ENCODE measurements at regions of chr17 and their contacts with region 1.

Region 1: DNA sequence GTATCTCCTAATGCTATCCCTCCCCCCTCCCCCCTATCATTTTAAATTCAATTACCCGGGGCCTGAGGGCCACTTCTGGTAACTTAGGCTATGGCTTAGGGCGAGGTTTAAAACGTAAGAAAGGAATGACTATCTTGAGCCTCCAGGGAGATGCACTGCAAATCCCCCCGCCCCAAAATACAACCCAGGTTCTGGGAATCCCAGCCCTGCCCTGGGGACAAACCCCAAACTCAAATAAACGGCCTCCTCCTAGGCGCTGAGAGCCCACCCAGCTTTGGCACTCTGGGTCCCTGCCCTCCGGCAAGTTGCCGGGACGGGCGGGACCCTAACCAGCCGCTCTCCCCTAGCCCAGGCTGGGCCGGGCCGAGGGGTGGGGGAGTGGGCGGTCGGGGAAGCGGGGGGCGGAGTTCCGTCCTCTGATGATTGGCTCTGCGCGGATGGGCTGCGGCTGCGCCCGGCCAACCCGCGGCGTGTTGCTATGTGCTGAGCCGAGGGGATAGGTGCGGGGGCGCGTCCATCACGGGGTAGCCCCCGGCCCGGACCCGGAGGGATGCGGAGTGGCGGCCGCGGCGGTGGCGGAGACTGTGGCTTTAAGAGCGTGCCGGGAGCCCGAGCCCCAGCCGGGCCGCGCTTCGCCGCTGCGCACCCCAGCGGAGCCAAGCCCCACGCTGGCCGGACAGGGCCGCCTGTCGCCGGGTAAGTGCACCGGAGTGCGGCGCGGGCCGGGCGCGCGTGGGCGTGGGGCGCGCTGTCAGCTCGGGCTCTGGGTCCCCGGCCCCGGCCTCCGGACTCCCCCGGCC is at the start of gene YPEL2:
- DNase-seq: peak; percentile 92
- ATAC-seq: peak; percentile 91
- H3K4me3 Mint-ChIP-seq: peak within 1 kb of the TSS; percentile 86
- H3K27ac Mint-ChIP-seq: peak within 1 kb of the TSS; percentile 74
- H3K4me1 Mint-ChIP-seq: peaks cover 67% of the 10 kb centered on the region
- H3K27me3 Mint-ChIP-seq: no peaks in the 10 kb centered on the region
- CTCF ChIP-seq: no peak
- total RNA-seq, gene YPEL2: 4.2 to 4.9 TPM

Region 2: GRCh38 chr17:59257101-59257500 is 74.2 kb before region 1 on chr17:
- CTCF ChIA-PET with region 1: no interaction called
- POLR2A ChIA-PET with region 1: no interaction called
- intact Hi-C with region 1: no loop called
- DNase-seq: no peak
- ATAC-seq: no peak
- H3K4me3 Mint-ChIP-seq: no peak overlapping the region
- H3K27ac Mint-ChIP-seq: no peak overlapping the region
- H3K4me1 Mint-ChIP-seq: no peaks in the 10 kb centered on the region
- H3K27me3 Mint-ChIP-seq: no peaks in the 10 kb centered on the region
- CTCF ChIP-seq: no peak

Region 3: DNA sequence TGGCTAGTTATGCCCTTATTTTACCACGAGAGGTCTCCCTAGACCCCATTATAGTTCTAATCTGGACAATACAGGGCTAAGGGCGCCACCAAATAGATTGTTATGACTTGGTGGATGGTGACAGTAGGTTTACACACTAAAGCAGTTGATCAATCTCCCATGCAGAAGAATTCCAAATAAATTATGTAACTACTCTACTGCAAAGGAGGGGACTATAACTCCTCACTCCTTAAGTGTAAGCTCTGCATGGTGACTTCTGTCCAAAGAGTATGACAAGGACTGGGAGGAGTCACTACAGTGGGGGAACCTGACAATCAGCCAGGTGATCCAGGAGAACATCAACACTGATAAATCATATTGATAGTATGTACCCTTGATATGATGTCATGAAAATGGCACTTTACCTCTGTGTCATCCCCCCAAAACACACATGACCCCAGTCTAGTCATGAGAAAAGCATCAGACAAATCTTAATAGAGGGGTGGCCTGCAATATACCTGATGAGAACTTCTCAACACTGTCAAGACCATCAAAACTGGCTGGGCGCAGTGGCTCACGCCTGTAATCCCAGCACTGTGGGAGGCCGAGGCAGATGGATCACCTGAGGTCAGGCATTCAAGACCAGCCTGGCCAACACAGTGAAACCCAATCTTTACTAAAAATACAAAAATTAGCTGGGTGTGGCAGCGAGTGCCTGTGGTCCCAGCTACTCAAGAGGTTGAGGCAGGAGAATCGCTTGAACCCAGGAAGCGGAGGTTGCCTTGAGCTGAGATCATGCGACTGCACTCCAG is 20.0 kb before region 1 on chr17:
- CTCF ChIA-PET with region 1: interaction called, 21 read pairs
- POLR2A ChIA-PET with region 1: interaction called, 3 read pairs
- intact Hi-C with region 1: no loop called
- DNase-seq: peak; percentile 51
- ATAC-seq: peak; percentile 99
- H3K4me3 Mint-ChIP-seq: no peak overlapping the region
- H3K27ac Mint-ChIP-seq: no peak overlapping the region
- H3K4me1 Mint-ChIP-seq: no peaks in the 10 kb centered on the region
- H3K27me3 Mint-ChIP-seq: no peaks in the 10 kb centered on the region
- CTCF ChIP-seq: peak; percentile 96

Region 4: DNA sequence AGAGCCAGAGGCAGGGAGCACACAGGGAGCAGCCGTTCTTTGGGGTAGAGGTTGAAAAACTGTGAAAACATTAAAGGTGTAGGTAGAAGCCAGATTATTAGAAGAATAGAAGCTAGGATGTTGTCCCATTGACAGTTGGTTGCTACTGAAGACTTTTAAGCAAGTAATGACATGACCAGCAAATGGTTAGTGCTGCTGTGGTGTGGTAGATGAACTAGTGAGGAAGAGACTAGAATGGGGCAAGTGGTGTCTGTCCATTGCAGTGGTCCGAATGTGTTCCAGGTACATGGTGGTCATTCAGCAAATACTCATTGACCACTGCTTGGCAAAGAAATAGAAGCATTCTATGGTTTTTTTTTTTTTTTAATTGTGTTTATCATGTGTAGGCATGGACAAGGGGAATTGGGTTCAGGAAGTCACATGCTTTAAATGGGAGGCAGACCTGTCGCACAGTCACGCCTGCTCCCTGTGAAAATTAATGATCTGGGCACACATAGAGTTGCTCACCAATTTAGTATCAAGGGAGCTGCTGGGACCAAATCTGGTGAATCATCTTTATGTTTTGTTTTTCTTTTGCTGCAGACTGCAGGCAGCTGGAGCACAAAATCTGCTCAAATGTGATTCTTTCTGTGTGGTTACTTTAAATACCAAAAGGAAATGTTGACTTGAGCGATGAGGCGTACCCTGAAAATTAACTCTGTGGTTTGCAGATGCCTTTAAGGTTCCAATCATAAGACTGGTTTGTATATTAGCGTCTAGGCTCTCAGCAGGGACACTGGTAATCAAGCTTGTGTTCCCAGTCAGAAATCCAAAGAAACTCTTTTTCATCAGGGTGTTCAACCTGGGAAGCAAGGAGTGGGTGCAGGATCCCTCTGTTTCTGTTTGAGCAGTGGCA is 30.8 kb after region 1 on chr17:
- CTCF ChIA-PET with region 1: interaction called, 22 read pairs
- POLR2A ChIA-PET with region 1: interaction called, 12 read pairs
- intact Hi-C with region 1: loop called (anchors 5 kb)
- DNase-seq: peak; percentile 65
- ATAC-seq: peak; percentile 65
- H3K4me3 Mint-ChIP-seq: peak overlapping the region; percentile 62
- H3K27ac Mint-ChIP-seq: peak overlapping the region; percentile 90
- H3K4me1 Mint-ChIP-seq: peaks cover 79% of the 10 kb centered on the region
- H3K27me3 Mint-ChIP-seq: no peaks in the 10 kb centered on the region
- CTCF ChIP-seq: no peak

Region 5: GRCh38 chr17:59387351-59388068 is 56.2 kb after region 1 on chr17:
- CTCF ChIA-PET with region 1: interaction called, 10 read pairs
- POLR2A ChIA-PET with region 1: no interaction called
- intact Hi-C with region 1: no loop called
- DNase-seq: no peak
- ATAC-seq: no peak
- H3K4me3 Mint-ChIP-seq: no peak overlapping the region
- H3K27ac Mint-ChIP-seq: no peak overlapping the region
- H3K4me1 Mint-ChIP-seq: peaks cover 8% of the 10 kb centered on the region
- H3K27me3 Mint-ChIP-seq: no peaks in the 10 kb centered on the region
- CTCF ChIP-seq: no peak

Region 6: GRCh38 chr17:59427425-59427921 is 96.1 kb after region 1 on chr17:
- CTCF ChIA-PET with region 1: interaction called, 65 read pairs
- POLR2A ChIA-PET with region 1: interaction called, 12 read pairs
- intact Hi-C with region 1: no loop called
- DNase-seq: peak; percentile 84
- ATAC-seq: peak; percentile 98
- H3K4me3 Mint-ChIP-seq: no peak overlapping the region
- H3K27ac Mint-ChIP-seq: peak overlapping the region; percentile 9
- H3K4me1 Mint-ChIP-seq: peaks cover 20% of the 10 kb centered on the region
- H3K27me3 Mint-ChIP-seq: peaks cover 1% of the 10 kb centered on the region
- CTCF ChIP-seq: peak; percentile 33

Region 7: GRCh38 chr17:59440784-59441441 is 109.6 kb after region 1 on chr17:
- CTCF ChIA-PET with region 1: interaction called, 114 read pairs
- POLR2A ChIA-PET with region 1: interaction called, 3 read pairs
- intact Hi-C with region 1: loop called (anchors 5 kb)
- DNase-seq: peak; percentile 98
- ATAC-seq: peak; percentile 96
- H3K4me3 Mint-ChIP-seq: peak overlapping the region; percentile 56
- H3K27ac Mint-ChIP-seq: peak overlapping the region; percentile 91
- H3K4me1 Mint-ChIP-seq: peaks cover 45% of the 10 kb centered on the region
- H3K27me3 Mint-ChIP-seq: no peaks in the 10 kb centered on the region
- CTCF ChIP-seq: peak; percentile 81

Measured in activated CD8-positive, alpha-beta T cell treated with anti-CD3 and anti-CD28 coated beads for 36 hours (primary cell).